ENCODE measurements at regions of chr17 and their contacts with region 1.

Region 1: GRCh38 chr17:82418001-82418986 is at the starts of genes HEXD and OGFOD3:
- DNase-seq: peak; percentile 71
- H3K4me3 ChIP-seq: peak within 1 kb of the TSS; percentile 82 to 83
- H3K27ac ChIP-seq: peak within 1 kb of the TSS; percentile 93 to 96
- H3K4me1 ChIP-seq: peaks cover 6% of the 10 kb centered on the region
- H3K27me3 ChIP-seq: no peaks in the 10 kb centered on the region
- CTCF ChIP-seq: peak in 2 of 4 experiments; percentile 48 to 53
- POLR2A ChIP-seq: peak; percentile 49
- total RNA-seq, gene HEXD: 76.1 to 145 TPM
- total RNA-seq, gene OGFOD3: 41.0 to 65.8 TPM

Region 2: DNA sequence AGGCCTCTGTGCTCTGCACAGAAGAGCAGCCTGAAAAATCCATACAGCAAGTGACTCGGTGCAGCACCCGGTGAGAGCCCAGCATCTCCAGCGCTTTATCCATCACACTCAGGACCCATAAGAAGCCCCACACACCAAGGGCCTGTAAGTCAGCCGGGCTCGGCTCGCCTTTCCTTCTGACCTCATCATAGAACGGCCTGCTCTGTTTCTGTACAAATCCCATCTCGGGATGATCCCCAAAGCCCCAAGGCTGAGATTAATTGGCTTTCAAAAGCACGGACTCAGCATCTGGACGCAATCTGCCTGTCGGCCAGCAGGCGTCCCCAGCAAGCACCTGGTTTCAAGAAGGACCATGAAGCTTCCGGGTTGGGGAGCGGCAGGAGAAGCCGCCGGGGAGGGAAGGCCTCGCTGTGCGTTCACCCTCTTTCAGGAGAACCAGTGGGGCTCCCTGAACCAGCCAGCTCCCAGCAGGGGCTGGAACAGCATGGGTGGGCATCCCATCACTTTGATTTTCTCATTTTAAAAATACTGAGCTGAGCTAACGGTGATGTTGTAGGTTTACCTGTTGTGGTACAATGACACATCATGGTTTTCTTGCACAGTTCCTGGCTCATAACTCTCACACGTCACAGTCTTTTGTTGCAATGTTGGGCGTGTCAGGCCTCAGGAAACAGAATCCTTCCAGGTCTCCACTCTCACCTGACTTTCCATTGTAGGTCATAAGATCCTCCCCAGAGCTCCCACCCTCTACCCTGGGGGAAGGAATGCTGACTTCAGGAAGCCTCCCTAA is 212.4 kb before region 1 on chr17:
- intact Hi-C with region 1: loop called (anchors 10 kb)
- DNase-seq: peak; percentile 85
- H3K4me3 ChIP-seq: no peak overlapping the region
- H3K27ac ChIP-seq: peak overlapping the region; percentile 79 to 82
- H3K4me1 ChIP-seq: no peaks in the 10 kb centered on the region
- H3K27me3 ChIP-seq: no peaks in the 10 kb centered on the region
- CTCF ChIP-seq: peak; percentile 80 to 97 (median 88)
- POLR2A ChIP-seq: no peak

Region 3: DNA sequence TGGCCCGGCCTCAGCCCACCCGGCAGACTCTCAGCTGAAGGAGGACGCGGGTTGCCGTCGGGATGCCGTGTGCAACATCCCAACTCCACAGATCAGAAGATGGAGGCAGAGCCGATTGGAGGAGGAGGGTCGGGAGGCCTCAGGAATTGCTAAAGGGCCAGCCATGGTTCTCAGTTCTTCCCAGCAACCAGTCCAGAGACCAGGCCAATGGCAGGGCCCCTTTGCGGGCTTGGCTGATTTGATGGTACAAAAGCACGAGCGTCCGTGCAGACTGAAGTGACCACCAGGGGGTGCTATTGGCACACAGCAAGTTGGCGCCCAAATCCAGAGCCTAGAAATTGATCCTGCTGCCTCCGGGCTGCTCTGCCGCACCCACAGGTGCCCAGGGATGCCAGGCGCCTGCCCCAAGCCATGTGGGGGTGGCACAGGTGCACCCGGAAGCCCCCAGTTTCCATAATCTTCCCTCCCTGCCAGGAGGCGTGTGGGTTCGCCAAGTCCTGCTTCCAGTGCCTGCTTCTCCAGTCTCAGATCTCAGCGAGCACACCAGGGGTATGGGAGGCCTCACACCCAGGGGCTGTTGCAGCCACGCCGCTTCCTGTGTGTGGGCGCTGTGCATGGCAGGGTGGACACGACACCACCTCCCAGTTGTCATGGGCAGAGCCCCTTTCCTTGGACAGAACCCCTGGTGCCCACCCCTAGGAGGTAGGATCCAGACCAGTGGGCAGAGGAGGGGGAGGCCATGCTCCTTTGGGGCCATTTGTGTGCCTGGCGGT is 66.4 kb before region 1 on chr17:
- intact Hi-C with region 1: loop called (anchors 1 kb)
- DNase-seq: peak; percentile 87
- H3K4me3 ChIP-seq: no peak overlapping the region
- H3K27ac ChIP-seq: no peak overlapping the region
- H3K4me1 ChIP-seq: no peaks in the 10 kb centered on the region
- H3K27me3 ChIP-seq: no peaks in the 10 kb centered on the region
- CTCF ChIP-seq: peak; percentile 94 to 100 (median 97)
- POLR2A ChIP-seq: no peak

Region 4: GRCh38 chr17:82457997-82458864 is 39.9 kb after region 1 on chr17 and contains the start of gene NARF:
- intact Hi-C with region 1: loop called (anchors 2 kb)
- DNase-seq: peak; percentile 98
- H3K4me3 ChIP-seq: peak within 1 kb of the TSS; percentile 67 to 95
- H3K27ac ChIP-seq: peak within 1 kb of the TSS; percentile 100
- H3K4me1 ChIP-seq: peaks cover 8% of the 10 kb centered on the region
- H3K27me3 ChIP-seq: no peaks in the 10 kb centered on the region
- CTCF ChIP-seq: no peak
- POLR2A ChIP-seq: peak; percentile 93
- total RNA-seq, gene NARF: 38.4 to 68.1 TPM

Region 5: GRCh38 chr17:82664701-82665182 is 246.4 kb after region 1 on chr17:
- intact Hi-C with region 1: no loop called
- DNase-seq: no peak
- H3K4me3 ChIP-seq: no peak overlapping the region
- H3K27ac ChIP-seq: no peak overlapping the region
- H3K4me1 ChIP-seq: no peaks in the 10 kb centered on the region
- H3K27me3 ChIP-seq: no peaks in the 10 kb centered on the region
- CTCF ChIP-seq: no peak
- POLR2A ChIP-seq: no peak

Measured in prostate gland (tissue), 2 donors.